ENCODE measurements at regions of chr18 and their contacts with region 1.

Region 1: GRCh38 chr18:32552421-32553030 is 81.8 kb upstream of the GAREM1 start:
- DNase-seq: peak; percentile 43 to 46
- H3K4me3 ChIP-seq: no peak overlapping the region
- H3K4me3 Mint-ChIP-seq: no peak overlapping the region
- H3K27ac Mint-ChIP-seq: no peak overlapping the region
- H3K4me1 ChIP-seq: no peaks in the 10 kb centered on the region
- H3K4me1 Mint-ChIP-seq: no peaks in the 10 kb centered on the region
- H3K27me3 ChIP-seq: no peaks in the 10 kb centered on the region
- H3K27me3 Mint-ChIP-seq: no peaks in the 10 kb centered on the region
- CTCF ChIP-seq: peak; percentile 40 to 51

Region 2: DNA sequence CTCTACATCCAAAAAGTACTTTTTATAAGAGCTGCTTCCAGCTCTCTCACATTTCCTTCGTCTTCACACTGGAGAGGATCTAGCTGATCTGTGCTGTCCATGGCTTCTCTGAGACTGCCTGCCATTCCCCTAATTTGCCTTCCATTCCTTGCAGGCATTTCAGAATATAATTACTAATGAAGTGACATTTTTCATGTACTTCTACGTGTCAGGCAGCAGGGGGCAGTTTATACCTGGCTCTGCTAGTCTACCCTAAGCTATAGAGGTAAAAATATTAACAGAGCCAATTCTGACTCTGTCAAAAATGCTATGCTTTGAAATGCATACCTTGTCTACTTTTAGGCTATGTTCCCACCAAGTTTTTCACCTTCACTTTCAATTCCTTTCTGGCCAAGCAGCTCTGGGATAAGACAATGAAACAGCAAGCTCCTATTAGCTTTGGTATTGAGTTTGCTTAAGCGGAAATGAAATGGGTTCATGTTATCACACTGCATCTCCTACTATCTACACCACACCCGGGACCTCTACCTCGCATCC is 280.8 kb before region 1 on chr18:
- CTCF ChIA-PET with region 1: interaction called, 7 read pairs
- POLR2A ChIA-PET with region 1: no interaction called
- intact Hi-C with region 1: loop called (anchors 1 kb)
- DNase-seq: peak in 1 of 2 experiments; percentile 23
- H3K4me3 ChIP-seq: no peak overlapping the region
- H3K4me3 Mint-ChIP-seq: no peak overlapping the region
- H3K27ac Mint-ChIP-seq: no peak overlapping the region
- H3K4me1 ChIP-seq: no peaks in the 10 kb centered on the region
- H3K4me1 Mint-ChIP-seq: no peaks in the 10 kb centered on the region
- H3K27me3 ChIP-seq: no peaks in the 10 kb centered on the region
- H3K27me3 Mint-ChIP-seq: peaks cover 2% of the 10 kb centered on the region
- CTCF ChIP-seq: peak; percentile 20 to 31

Region 3: DNA sequence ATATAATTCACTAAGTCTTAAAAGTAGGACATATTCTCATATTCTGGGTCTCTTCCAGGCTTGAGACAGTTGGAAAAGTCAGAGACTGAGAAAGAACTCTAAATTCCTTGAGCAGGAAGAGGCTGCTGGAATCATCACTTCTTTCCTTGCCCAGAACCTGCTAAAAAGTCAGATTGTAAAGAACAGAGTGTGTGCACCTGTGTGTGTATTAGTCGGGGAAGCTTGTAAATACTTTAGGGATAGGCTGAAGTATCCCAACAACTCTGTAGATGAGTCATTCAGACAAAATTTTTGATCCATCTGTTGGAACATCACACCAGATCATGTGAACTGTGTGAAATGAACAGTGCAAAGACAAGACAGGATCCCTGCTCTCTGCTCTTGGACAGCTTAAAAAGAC is 97.9 kb before region 1 on chr18:
- CTCF ChIA-PET with region 1: no interaction called
- POLR2A ChIA-PET with region 1: no interaction called
- intact Hi-C with region 1: no loop called
- DNase-seq: no peak
- H3K4me3 ChIP-seq: no peak overlapping the region
- H3K4me3 Mint-ChIP-seq: no peak overlapping the region
- H3K27ac Mint-ChIP-seq: no peak overlapping the region
- H3K4me1 ChIP-seq: no peaks in the 10 kb centered on the region
- H3K4me1 Mint-ChIP-seq: no peaks in the 10 kb centered on the region
- H3K27me3 ChIP-seq: no peaks in the 10 kb centered on the region
- H3K27me3 Mint-ChIP-seq: no peaks in the 10 kb centered on the region
- CTCF ChIP-seq: no peak

Region 4: GRCh38 chr18:32470713-32471633 is 81.6 kb before region 1 on chr18 and contains the start of gene GAREM1:
- CTCF ChIA-PET with region 1: no interaction called
- POLR2A ChIA-PET with region 1: no interaction called
- intact Hi-C with region 1: loop called (anchors 2 kb)
- DNase-seq: peak; percentile 85
- H3K4me3 ChIP-seq: peak within 1 kb of the TSS; percentile 44
- H3K4me3 Mint-ChIP-seq: peak within 1 kb of the TSS; percentile 81
- H3K27ac Mint-ChIP-seq: no peak within 1 kb of the TSS
- H3K4me1 ChIP-seq: no peaks in the 10 kb centered on the region
- H3K4me1 Mint-ChIP-seq: no peaks in the 10 kb centered on the region
- H3K27me3 ChIP-seq: no peaks in the 10 kb centered on the region
- H3K27me3 Mint-ChIP-seq: peaks cover 4% of the 10 kb centered on the region
- CTCF ChIP-seq: peak in 1 of 2 experiments; percentile 48
- total RNA-seq, gene GAREM1: 0.50 and 0.51 TPM in 2 replicates

Region 5: GRCh38 chr18:32695534-32695933 is 143.0 kb after region 1 on chr18:
- CTCF ChIA-PET with region 1: no interaction called
- POLR2A ChIA-PET with region 1: no interaction called
- intact Hi-C with region 1: no loop called
- DNase-seq: no peak
- H3K4me3 ChIP-seq: no peak overlapping the region
- H3K4me3 Mint-ChIP-seq: no peak overlapping the region
- H3K27ac Mint-ChIP-seq: no peak overlapping the region
- H3K4me1 ChIP-seq: no peaks in the 10 kb centered on the region
- H3K4me1 Mint-ChIP-seq: no peaks in the 10 kb centered on the region
- H3K27me3 ChIP-seq: no peaks in the 10 kb centered on the region
- H3K27me3 Mint-ChIP-seq: no peaks in the 10 kb centered on the region
- CTCF ChIP-seq: no peak